Right cardiac atrium (tissue), 5 donors: ENCODE measurements at regions of chr12 and their contacts with region 1.

Region 1: DNA sequence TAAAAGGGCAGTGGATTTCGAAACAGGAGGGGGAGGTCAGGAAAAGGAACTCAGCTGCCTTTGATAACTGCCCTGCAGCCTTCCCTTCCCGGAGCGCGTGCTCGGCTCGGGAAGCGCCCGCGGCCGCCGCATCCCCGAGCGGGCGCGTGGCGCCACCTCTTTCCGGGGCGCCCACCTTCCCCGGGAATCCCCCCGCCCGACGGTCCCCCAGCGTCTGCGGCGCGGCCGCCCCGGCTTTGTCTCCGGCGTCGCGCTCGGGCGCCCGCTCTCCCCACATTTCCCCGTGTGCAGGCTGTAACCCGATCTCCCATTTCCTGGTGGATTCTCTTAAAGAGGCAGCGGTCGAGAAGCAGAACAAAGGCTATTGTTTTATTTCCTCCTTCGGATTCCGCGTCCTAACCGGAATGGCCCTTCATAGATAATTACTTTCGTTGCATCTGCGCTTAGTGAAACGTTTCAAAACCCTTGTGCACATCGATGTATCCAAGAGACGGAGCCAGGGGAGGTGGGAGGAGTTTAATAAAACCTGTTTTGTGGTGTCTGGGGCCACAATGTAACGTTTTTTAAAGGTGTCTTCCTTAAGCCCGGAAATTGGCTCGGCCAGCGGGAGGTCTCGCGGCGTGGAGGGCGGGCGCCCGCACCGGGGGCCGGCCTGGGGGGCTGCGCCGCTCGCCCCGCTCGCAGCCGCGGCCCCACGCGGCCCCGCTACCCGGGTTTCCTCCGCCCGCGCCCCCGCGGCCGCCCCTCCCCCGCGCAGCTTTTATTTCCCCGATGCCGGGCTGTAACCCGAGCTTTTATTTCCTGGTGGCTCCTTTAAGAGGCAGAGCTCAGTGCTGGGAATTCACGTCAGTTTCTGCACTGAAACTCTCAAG is at the start of gene ETV6:
- DNase-seq: peak; percentile 72 to 90 (median 88)
- ATAC-seq: peak; percentile 80 to 85
- H3K4me3 ChIP-seq: peak within 1 kb of the TSS; percentile 100
- H3K27ac ChIP-seq: peak within 1 kb of the TSS; percentile 92
- H3K4me1 ChIP-seq: peaks cover 6% of the 10 kb centered on the region
- H3K27me3 ChIP-seq: no peaks in the 10 kb centered on the region
- total RNA-seq, gene ETV6: 9.9 to 31.4 (median 11.7) TPM

Region 2: GRCh38 chr12:11581179-11581755 is 67.8 kb before region 1 on chr12:
- intact Hi-C with region 1: loop called in 1 of 4 experiments (anchors 5 kb)
- DNase-seq: peak in 2 of 3 donors; percentile 35 to 66
- ATAC-seq: peak in 1 of 2 donors; percentile 39
- H3K4me3 ChIP-seq: no peak overlapping the region
- H3K27ac ChIP-seq: no peak overlapping the region
- H3K4me1 ChIP-seq: peaks cover 1% of the 10 kb centered on the region
- H3K27me3 ChIP-seq: no peaks in the 10 kb centered on the region

Region 3: GRCh38 chr12:11592484-11592883 is 56.6 kb before region 1 on chr12:
- intact Hi-C with region 1: no loop called
- DNase-seq: no peak
- ATAC-seq: no peak
- H3K4me3 ChIP-seq: no peak overlapping the region
- H3K27ac ChIP-seq: no peak overlapping the region
- H3K4me1 ChIP-seq: no peaks in the 10 kb centered on the region
- H3K27me3 ChIP-seq: no peaks in the 10 kb centered on the region

Region 4: DNA sequence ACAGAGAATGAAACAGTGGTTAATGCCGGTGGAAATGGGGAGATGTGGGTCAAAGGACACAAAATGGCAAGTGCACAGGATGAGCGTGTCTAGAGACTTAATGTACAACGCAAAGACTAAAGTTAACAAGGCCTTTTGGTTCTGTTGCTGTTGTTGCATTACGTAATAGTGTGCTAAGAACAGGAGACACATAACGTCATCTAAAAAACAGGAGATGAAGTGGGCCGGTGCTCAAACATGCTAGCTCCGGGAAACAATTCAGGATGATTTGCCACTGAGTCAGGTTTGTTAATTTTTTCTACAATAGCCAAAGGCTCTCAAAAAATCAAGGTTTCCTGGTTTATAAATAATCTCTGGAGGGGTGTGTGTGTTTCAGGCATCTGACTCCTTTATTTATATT is 55.9 kb after region 1 on chr12:
- intact Hi-C with region 1: loop called in 1 of 4 experiments (anchors 10 kb)
- DNase-seq: no peak
- ATAC-seq: peak; percentile 38 to 49
- H3K4me3 ChIP-seq: no peak overlapping the region
- H3K27ac ChIP-seq: no peak overlapping the region
- H3K4me1 ChIP-seq: peaks cover 14% of the 10 kb centered on the region
- H3K27me3 ChIP-seq: no peaks in the 10 kb centered on the region

Region 5: DNA sequence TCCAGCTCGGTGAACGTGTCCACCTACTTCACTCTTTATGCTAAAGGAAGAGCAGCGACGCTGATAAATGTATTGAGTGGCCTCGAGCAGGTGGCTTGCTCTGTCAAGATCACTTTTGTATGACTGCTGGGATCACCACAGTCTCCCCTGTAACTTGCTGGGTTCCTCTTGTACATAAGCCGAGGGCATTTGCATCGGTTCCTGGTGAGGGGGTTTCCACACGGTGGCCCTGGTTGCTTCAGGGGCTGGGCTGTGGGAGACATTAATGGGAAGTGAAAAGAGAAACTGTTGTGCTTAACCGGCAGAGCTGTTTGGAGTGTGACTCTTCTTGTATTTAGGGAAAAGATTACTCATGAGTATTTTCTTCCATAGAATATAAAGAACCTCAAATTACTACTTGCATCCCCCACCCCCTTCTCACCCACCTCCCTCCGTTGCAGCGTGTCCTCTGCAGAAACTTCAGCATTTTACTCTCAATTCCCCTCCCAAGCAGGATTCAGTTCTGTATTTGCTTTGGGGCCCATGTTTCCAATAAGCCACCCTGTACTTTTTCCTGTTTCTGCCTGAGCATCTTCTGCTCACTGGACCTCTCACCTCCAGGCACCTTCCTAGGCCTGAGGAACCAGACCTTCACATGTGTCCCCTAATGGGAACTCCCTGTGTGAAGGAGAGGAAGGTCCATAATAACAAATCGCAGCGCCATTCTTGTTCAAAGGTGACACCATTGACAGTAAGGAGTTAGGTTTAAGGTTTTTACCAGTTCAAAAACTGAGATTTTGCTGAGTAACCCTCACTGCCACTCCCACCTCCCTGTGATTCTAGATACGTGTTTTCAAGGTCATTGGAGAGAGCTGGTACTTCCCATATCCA is 187.4 kb after region 1 on chr12:
- intact Hi-C with region 1: loop called in 1 of 4 experiments (anchors 10 kb)
- DNase-seq: peak; percentile 39 to 64 (median 64)
- ATAC-seq: no peak
- H3K4me3 ChIP-seq: no peak overlapping the region
- H3K27ac ChIP-seq: peak overlapping the region; percentile 42
- H3K4me1 ChIP-seq: peaks cover 21% of the 10 kb centered on the region
- H3K27me3 ChIP-seq: no peaks in the 10 kb centered on the region

Region 6: DNA sequence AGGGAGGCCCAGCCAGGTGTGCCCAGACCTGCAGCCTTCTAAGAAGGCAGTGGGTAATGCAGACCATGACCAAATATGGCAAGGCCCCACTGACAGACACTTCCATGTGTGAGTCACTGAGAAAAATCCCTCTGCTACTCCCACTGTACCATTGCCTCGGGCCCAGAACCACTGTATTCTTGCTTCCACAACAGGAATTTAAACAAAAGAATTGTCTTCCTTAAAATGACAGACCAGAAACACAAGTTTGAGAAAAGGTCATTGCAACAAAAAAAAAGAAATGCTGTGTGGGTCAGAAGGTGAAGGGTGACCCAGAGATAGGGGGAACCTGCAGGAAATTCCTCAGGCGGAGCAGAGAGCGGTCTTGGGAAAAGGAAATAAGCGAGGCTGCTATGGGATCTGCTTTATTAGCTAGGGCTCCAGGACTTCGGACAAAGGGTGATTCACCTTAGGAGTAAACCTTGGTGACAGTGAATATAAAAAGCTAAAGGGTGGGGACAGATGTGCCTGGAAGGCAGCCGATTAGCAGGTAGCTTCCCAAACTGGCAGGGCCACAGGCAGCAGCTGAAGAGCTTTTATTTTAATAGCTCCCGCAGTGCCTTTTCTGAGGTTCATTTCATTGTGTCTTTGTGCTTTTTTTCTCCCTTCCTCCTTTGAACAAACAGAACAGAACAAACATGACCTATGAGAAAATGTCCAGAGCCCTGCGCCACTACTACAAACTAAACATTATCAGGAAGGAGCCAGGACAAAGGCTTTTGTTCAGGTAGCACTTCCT is 236.4 kb after region 1 on chr12:
- intact Hi-C with region 1: loop called in 2 of 4 experiments (anchors 10 kb)
- DNase-seq: peak in 1 of 3 donors; percentile 12
- ATAC-seq: peak; percentile 78 to 93
- H3K4me3 ChIP-seq: no peak overlapping the region
- H3K27ac ChIP-seq: peak overlapping the region; percentile 84
- H3K4me1 ChIP-seq: peaks cover 6% of the 10 kb centered on the region
- H3K27me3 ChIP-seq: no peaks in the 10 kb centered on the region